Testis (tissue), 5 donors: ENCODE measurements at regions of chr21 and their contacts with region 1.

Region 1: DNA sequence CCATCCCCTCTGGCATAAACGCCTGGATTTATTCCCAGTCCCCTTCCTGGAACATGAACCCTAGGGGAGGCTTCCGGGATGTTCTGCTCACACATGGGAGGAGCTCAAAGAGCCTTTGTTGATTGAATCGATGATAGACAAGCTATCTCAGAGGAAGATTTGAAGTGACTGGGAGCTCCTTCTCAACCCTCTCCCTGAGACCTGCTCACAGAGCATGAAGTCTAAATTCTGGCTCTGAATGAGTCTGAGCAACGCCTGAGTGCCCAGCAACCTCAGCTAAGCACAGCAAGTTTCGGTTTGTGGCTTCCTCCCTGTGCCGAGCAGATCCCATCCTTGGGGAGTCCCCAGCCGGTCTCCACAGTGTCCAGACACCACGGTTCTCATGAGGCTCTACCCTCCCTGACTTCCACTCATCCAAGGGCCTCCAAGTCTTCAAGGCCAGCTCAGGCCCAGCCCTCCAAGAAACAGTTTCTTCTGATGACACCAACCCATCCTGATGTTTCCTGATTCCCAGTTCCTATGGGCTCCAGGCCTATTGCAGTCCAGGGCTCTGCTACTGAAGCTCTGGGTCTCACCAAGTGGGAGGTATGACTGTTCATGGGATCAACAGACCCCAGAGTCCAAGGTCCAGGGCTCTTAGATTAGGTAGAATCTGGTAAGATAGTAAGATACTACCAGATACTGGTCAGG is 190.8 kb downstream of the DYRK1A start:
- DNase-seq: no peak
- H3K4me3 ChIP-seq: no peak overlapping the region
- H3K27ac ChIP-seq: no peak overlapping the region
- H3K4me1 ChIP-seq: peaks cover 10% of the 10 kb centered on the region
- H3K27me3 ChIP-seq: no peaks in the 10 kb centered on the region
- CTCF ChIP-seq: no peak
- POLR2A ChIP-seq: no peak

Region 2: GRCh38 chr21:37348664-37349063 is 208.7 kb before region 1 on chr21:
- intact Hi-C with region 1: loop called (anchors 10 kb)
- DNase-seq: no peak
- H3K4me3 ChIP-seq: no peak overlapping the region
- H3K27ac ChIP-seq: no peak overlapping the region
- H3K4me1 ChIP-seq: no peaks in the 10 kb centered on the region
- H3K27me3 ChIP-seq: no peaks in the 10 kb centered on the region
- CTCF ChIP-seq: no peak
- POLR2A ChIP-seq: no peak

Region 3: DNA sequence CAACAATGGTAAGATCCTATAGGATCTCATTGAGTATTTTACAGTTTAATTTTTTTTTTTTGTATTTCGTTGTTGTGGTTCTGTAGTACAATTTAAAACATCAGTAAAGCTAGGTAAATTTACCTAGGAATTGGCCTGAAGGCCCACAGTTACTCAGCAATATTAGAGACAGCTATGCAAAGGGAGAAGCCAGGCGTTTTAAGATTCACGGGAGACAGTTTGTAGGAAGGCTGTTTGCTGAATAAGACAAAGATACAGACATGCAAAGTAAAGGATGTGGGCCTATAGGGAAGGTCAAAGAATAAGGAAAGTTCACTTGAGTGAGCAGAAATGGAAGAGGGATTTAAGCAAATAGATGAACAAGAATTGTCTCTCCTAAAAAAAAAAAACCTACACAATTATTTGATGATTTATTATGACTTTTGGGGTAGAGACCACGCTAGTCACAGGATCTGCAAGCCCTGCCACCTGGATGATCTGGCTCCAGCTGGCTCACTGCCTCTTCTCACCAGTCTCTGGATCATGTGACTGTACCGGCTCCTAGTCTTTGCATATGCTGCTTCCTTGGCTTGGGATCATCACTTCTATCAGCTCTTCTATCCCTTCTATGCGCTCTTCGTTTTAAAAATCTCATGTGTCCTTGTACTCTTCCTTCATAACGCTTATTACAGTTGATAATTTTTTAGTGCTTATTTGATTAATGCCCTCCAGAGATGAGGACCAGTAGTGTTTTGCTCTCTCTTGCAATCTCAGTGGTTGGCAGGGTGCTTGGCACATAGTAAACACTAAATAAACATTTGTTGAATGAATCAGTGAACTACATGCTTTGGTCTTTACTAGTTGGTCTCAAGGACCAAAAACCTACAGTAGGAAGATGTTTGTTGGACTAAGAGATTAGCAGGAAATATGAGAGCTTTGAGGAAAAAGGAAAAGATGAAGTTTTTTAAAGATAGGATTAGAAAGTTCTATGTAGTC is 176.8 kb before region 1 on chr21:
- intact Hi-C with region 1: no loop called
- DNase-seq: peak; percentile 56
- H3K4me3 ChIP-seq: no peak overlapping the region
- H3K27ac ChIP-seq: peak overlapping the region in 1 of 2 donors; percentile 47
- H3K4me1 ChIP-seq: peaks cover 25% of the 10 kb centered on the region
- H3K27me3 ChIP-seq: no peaks in the 10 kb centered on the region
- CTCF ChIP-seq: no peak
- POLR2A ChIP-seq: no peak

Region 4: GRCh38 chr21:37758982-37759381 is 201.6 kb after region 1 on chr21:
- intact Hi-C with region 1: no loop called
- DNase-seq: no peak
- H3K4me3 ChIP-seq: no peak overlapping the region
- H3K27ac ChIP-seq: no peak overlapping the region
- H3K4me1 ChIP-seq: no peaks in the 10 kb centered on the region
- H3K27me3 ChIP-seq: no peaks in the 10 kb centered on the region
- CTCF ChIP-seq: no peak
- POLR2A ChIP-seq: no peak